ENCODE measurements at regions of chr3 and their contacts with region 1.

Region 1: GRCh38 chr3:119160383-119160782 is 13.0 kb upstream of the UPK1B start:
- DNase-seq: peak in 1 of 2 experiments; percentile 93
- H3K4me3 ChIP-seq: peak overlapping the region; percentile 21; the same call in 1 of the 2 replicates
- H3K27ac ChIP-seq: peak overlapping the region; percentile 84
- H3K4me1 ChIP-seq: peaks cover 33% of the 10 kb centered on the region
- H3K27me3 ChIP-seq: no peaks in the 10 kb centered on the region
- CTCF ChIP-seq: no peak

Region 2: DNA sequence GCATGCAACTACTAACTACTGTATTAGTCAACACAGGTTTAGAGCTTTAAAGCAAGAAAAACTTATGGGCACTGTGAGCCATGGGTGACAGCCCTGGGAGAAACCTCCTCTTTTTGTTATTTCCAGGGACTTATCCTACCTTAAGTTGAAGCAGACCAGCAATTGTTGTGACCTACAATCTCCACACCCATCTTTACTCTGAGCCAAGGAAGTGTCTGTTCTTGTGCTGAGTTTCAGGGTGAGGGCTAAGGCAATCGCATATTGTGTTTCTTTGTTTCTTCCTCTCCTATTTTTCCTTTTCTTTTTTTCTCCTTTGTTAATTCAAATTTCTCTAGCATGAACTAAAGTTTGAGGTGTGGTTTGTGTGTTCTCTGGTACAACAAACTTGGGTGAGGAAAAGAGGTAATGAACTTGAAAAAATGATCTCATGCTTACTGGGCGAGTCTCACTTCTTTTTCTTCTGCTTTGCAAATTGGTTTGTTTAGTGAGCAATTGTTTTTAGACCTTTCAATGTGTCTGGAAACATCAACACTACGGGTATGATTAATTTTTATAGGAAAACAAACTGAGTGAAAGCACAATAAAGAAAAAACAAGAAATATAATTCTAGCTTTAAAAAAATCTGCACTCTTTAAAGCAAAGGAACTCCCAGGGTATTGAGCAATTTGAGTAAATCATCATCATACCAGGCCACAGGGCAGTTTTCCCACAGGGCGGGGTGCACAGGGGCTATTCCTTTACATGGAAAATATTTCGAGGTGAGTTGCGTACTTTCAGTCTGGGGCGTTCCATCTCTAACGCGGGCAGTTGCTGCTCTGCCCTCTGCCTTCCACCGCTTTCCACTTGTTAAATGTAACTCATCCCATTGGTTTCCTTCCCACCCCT is 15.7 kb after region 1 on chr3:
- CTCF ChIA-PET with region 1: no interaction called
- POLR2A ChIA-PET with region 1: no interaction called
- intact Hi-C with region 1: loop called (anchors 1 kb)
- DNase-seq: peak; percentile 72 to 86
- H3K4me3 ChIP-seq: peak overlapping the region; percentile 38; the same call in 1 of the 2 replicates
- H3K27ac ChIP-seq: peak overlapping the region; percentile 95
- H3K4me1 ChIP-seq: peaks cover 28% of the 10 kb centered on the region
- H3K27me3 ChIP-seq: no peaks in the 10 kb centered on the region
- CTCF ChIP-seq: no peak

Region 3: GRCh38 chr3:119194237-119195150 is 34.1 kb after region 1 on chr3:
- CTCF ChIA-PET with region 1: no interaction called
- POLR2A ChIA-PET with region 1: no interaction called
- intact Hi-C with region 1: loop called (anchors 5 kb)
- DNase-seq: no peak
- H3K4me3 ChIP-seq: no peak overlapping the region
- H3K27ac ChIP-seq: no peak overlapping the region
- H3K4me1 ChIP-seq: no peaks in the 10 kb centered on the region
- H3K27me3 ChIP-seq: no peaks in the 10 kb centered on the region
- CTCF ChIP-seq: no peak

Measured in PC-9 (cell line).